Left ventricle myocardium inferior (tissue), 1 donor: ENCODE measurements at regions of chr2 and their contacts with region 1.

Region 1: GRCh38 chr2:174931724-174932123 is 73.5 kb downstream of the CHN1 start:
- DNase-seq: no peak
- H3K4me3 ChIP-seq: no peak overlapping the region
- H3K27ac ChIP-seq: no peak overlapping the region
- H3K4me1 ChIP-seq: peaks cover 5% of the 10 kb centered on the region
- H3K27me3 ChIP-seq: no peaks in the 10 kb centered on the region
- CTCF ChIP-seq: no peak

Region 2: DNA sequence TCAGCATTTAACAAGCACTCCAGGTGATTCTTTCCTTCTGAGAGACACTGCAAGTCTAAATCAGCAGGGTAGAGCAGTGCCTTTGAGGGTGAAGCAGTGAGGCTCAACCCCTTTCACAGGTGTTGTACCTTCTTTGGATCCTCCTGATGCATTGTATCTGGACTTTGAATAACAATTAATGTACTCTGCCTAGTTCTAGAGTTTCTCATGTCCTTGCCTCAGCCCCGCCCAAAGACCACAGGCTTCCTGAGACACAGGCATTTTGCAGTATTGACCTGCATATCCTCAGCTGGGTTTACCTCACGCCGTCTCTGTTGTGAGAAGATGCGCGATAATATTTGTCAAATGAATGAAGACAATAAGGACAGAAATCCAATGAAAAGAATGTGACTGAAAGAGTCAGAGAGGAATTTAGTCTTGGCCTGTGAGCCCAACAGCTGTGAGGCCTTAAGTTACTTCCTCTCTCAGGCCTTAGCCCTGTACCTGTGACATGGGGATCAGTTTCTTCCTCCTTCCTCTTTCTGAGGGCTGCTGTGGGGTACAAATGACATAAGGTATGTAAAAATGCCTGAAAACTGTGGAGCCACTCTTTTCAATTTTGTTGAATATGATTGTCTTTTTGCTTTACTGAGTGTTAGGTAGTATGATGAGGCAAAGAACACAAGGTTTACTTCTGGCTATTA is 377.8 kb before region 1 on chr2:
- intact Hi-C with region 1: loop called (anchors 5 kb)
- DNase-seq: no peak
- H3K4me3 ChIP-seq: no peak overlapping the region
- H3K27ac ChIP-seq: no peak overlapping the region
- H3K4me1 ChIP-seq: peaks cover 18% of the 10 kb centered on the region
- H3K27me3 ChIP-seq: no peaks in the 10 kb centered on the region
- CTCF ChIP-seq: no peak

Region 3: DNA sequence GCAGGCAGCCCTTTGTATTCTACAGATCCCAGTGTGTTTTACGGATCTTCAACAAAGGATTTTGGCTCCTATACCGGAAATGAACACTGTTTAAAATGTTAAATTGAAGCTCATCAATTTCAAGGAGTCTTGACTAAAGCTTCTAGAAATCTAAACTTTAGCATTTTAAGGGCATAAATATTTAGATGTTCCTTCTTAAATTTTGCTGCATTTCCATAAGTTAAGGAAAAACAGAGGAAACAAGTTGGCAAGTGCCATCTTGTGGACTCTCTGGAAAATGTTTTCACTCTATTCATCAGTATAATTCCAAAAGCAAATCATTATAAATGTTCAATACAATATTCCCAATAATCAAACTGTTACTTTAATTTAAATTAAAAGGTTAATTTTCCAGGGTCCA is 53.9 kb after region 1 on chr2:
- intact Hi-C with region 1: no loop called
- DNase-seq: no peak
- H3K4me3 ChIP-seq: no peak overlapping the region
- H3K27ac ChIP-seq: no peak overlapping the region
- H3K4me1 ChIP-seq: peaks cover 4% of the 10 kb centered on the region
- H3K27me3 ChIP-seq: no peaks in the 10 kb centered on the region
- CTCF ChIP-seq: peak; percentile 67